Mammary epithelial cell (primary cell): ENCODE measurements at regions of chr2 and their contacts with region 1.

Region 1: GRCh38 chr2:181984814-181985631 is 630 bp upstream of the PPP1R1C start:
- DNase-seq: no peak
- H3K4me3 ChIP-seq: no peak overlapping the region
- H3K27ac ChIP-seq: no peak overlapping the region
- H3K4me1 ChIP-seq: no peaks in the 10 kb centered on the region
- H3K27me3 ChIP-seq: no peaks in the 10 kb centered on the region
- CTCF ChIP-seq: no peak

Region 2: GRCh38 chr2:180133736-180134135 is 1851.3 kb before region 1 on chr2:
- CTCF ChIA-PET with region 1: interaction called, 18 read pairs
- dilution Hi-C with region 1: no loop called
- in situ Hi-C with region 1: no loop called
- intact Hi-C with region 1: no loop called
- DNase-seq: no peak
- H3K4me3 ChIP-seq: no peak overlapping the region
- H3K27ac ChIP-seq: no peak overlapping the region
- H3K4me1 ChIP-seq: peaks cover 9% of the 10 kb centered on the region
- H3K27me3 ChIP-seq: no peaks in the 10 kb centered on the region
- CTCF ChIP-seq: no peak

Region 3: GRCh38 chr2:181823405-181823804 is 161.6 kb before region 1 on chr2:
- CTCF ChIA-PET with region 1: no interaction called
- dilution Hi-C with region 1: no loop called
- in situ Hi-C with region 1: no loop called
- intact Hi-C with region 1: no loop called
- DNase-seq: no peak
- H3K4me3 ChIP-seq: no peak overlapping the region
- H3K27ac ChIP-seq: no peak overlapping the region
- H3K4me1 ChIP-seq: no peaks in the 10 kb centered on the region
- H3K27me3 ChIP-seq: no peaks in the 10 kb centered on the region
- CTCF ChIP-seq: no peak